Breast epithelium (tissue), 4 donors: ENCODE measurements at regions of chr12 and their contacts with region 1.

Region 1: GRCh38 chr12:67111182-67111581 is 158.0 kb upstream of the CAND1 start:
- DNase-seq: no peak
- H3K4me3 ChIP-seq: no peak overlapping the region
- H3K27ac ChIP-seq: no peak overlapping the region
- H3K4me1 ChIP-seq: no peaks in the 10 kb centered on the region
- H3K27me3 ChIP-seq: no peaks in the 10 kb centered on the region
- CTCF ChIP-seq: no peak
- POLR2A ChIP-seq: no peak

Region 2: GRCh38 chr12:67046062-67046461 is 65.1 kb before region 1 on chr12:
- intact Hi-C with region 1: loop called (anchors 2 kb)
- DNase-seq: no peak
- H3K4me3 ChIP-seq: no peak overlapping the region
- H3K27ac ChIP-seq: no peak overlapping the region
- H3K4me1 ChIP-seq: no peaks in the 10 kb centered on the region
- H3K27me3 ChIP-seq: no peaks in the 10 kb centered on the region
- CTCF ChIP-seq: no peak
- POLR2A ChIP-seq: no peak

Region 3: DNA sequence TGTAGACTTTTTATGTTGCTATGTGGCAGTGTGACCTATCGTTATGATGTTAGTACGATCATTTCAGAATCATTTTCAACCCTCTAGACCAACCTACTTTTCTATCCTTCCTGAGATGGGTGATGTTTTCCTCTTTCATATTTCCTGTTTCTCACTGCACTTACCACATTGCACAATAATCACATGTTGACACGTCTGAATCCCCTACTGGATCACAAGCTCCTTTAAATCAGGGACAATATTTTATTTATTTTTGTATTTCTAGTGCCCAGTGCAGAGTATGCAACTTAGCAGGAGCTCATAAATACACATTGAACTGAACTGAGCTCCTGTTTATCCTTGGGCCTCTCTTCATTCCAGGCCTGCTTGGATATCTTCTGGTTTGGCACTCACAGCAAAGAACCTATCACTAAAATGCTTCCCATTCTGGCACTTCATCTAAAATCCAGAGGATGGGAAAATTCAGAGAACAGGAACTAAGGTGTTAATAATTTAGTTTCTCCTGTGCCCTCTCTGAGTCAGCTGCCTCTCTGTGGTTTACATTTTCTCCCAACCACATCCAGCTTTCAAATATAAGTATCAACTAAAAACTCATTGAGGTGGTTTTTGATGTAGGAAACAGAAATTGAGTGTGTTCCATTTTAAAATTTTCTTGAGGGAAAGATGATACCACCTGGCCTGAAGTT is 467.9 kb after region 1 on chr12:
- intact Hi-C with region 1: no loop called
- DNase-seq: no peak
- H3K4me3 ChIP-seq: no peak overlapping the region
- H3K27ac ChIP-seq: no peak overlapping the region
- H3K4me1 ChIP-seq: no peaks in the 10 kb centered on the region
- H3K27me3 ChIP-seq: no peaks in the 10 kb centered on the region
- CTCF ChIP-seq: no peak
- POLR2A ChIP-seq: no peak